Mammary epithelial cell (primary cell): ENCODE measurements at regions of chr2 and their contacts with region 1.

Region 1: DNA sequence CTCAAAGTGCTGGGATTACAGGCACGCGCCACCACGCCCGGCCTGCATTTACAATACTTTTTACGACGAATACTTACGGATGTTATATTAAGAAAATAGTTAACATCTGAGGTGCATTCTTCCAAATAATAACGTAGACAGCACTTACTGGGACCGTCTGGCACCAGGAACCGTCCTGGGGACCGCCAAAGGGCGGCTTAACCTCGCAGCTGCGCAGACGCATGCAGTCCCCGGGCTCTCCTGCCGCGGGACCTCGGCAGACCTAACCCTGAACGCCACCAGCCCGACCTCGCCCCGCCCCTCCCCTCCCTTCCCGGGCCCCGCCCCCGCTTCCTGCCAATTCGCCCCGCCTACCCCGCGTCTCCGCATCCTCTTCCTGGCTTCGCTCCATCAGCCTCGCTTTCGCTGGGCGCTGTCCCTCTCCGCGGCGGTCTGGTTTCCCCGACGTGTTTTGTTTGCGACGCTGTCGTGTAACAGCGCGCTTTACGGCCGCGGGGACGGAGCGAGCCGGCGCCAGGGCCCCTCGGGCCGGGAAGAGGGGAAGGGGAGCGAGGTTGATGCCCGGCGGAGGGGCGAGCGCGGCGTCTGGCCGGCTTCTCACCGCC is at the start of gene CNOT11:
- DNase-seq: peak; percentile 98
- H3K4me3 ChIP-seq: peak within 1 kb of the TSS; percentile 71 to 89 (median 88)
- H3K27ac ChIP-seq: peak within 1 kb of the TSS; percentile 85
- H3K4me1 ChIP-seq: peaks cover 31% of the 10 kb centered on the region
- H3K27me3 ChIP-seq: no peaks in the 10 kb centered on the region
- CTCF ChIP-seq: peak in 1 of 2 donors; percentile 1
- total RNA-seq, gene CNOT11: 43.8 to 53.7 TPM

Region 2: DNA sequence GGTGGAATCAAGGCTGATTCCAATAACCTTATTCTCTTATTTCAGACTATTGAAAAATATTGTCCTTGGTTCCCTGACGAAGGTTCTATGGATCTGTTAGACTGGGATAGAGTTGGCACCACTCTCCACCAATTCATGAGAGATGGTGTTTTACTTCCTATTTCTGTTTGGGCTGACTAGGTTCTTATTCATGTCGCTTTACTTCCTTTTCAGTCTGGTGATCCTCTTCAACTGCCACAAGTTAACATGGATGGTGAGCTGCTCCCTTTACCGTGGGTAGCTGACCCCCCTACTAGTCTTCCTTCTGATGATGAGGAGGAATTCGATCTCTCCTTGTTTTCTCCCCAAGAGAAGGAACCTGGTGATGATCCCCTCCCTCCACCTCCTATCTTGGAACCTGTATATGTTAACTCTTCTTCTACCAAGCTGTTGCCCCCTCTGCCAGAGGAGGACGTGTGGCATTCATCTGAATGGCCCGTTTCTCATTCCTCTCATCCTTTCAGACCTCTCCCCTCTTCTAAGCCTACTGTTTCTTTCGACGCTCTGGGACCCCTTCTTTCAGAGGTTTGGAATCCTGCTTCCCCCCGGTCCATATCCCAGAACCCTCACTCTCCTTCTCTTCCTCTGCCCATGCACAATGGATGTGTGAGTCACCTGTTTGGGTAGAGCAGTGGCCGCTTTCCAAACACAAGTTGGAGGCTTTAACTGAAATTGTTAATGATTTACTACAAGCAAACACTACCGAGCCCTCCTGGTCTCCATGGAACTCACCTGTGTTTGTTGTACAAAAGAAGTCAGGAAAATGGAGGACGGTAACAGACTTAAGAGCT is 13.4 kb before region 1 on chr2:
- CTCF ChIA-PET with region 1: interaction called, 8 read pairs
- dilution Hi-C with region 1: no loop called
- in situ Hi-C with region 1: no loop called
- intact Hi-C with region 1: loop called (anchors 1 kb)
- DNase-seq: no peak
- H3K4me3 ChIP-seq: no peak overlapping the region
- H3K27ac ChIP-seq: no peak overlapping the region
- H3K4me1 ChIP-seq: no peaks in the 10 kb centered on the region
- H3K27me3 ChIP-seq: no peaks in the 10 kb centered on the region
- CTCF ChIP-seq: no peak

Region 3: DNA sequence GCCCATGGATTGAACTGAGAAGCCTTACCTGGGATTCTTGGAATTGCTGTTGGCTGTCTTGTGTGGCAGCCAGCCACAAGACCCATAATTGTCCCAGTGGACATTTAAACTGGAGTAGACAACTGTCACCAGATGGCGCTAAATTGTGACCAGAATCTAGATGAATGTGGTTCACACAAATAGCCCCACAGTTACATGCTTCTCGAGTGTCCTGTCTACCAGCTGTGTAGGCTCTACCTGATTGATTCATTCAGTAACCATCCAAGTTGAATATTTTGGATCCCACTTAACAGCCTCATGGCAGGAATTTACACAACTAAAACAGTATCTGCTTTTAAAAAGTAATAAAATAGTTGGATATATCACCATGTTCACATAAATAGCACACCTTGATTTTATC is 518.2 kb after region 1 on chr2:
- CTCF ChIA-PET with region 1: no interaction called
- dilution Hi-C with region 1: no loop called
- in situ Hi-C with region 1: no loop called
- intact Hi-C with region 1: no loop called
- DNase-seq: peak; percentile 57
- H3K4me3 ChIP-seq: no peak overlapping the region
- H3K27ac ChIP-seq: no peak overlapping the region
- H3K4me1 ChIP-seq: peaks cover 55% of the 10 kb centered on the region
- H3K27me3 ChIP-seq: no peaks in the 10 kb centered on the region
- CTCF ChIP-seq: peak; percentile 24 to 47